ENCODE measurements at regions of chr6 and their contacts with region 1.

Region 1: GRCh38 chr6:12648171-12648570 is 68.4 kb upstream of the PHACTR1 start:
- DNase-seq: no peak
- ATAC-seq: no peak
- H3K4me3 ChIP-seq: no peak overlapping the region
- H3K27ac ChIP-seq: no peak overlapping the region
- H3K4me1 ChIP-seq: no peaks in the 10 kb centered on the region
- H3K27me3 ChIP-seq: peaks cover 3% of the 10 kb centered on the region
- CTCF ChIP-seq: no peak
- POLR2A ChIP-seq: no peak
- RAD21 ChIP-seq: no peak

Region 2: DNA sequence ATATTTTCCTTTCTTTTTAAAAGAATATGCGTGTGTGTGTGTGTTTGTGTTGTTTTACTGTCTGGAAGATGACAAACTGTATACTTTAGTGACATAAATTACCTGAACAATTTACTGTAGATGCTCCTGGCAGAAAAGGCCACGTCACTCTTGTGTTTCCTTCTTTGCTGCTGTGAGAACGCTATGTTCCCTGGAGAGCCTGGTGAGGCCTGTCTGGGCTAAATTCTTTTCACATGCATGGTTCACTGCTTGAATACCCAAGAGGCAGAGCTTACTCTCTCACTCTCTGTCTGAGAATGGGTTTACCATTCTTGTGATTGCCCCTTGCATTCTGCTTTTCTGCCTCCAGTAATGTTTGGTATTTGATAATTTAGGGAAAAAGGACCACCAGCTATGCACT is 293.7 kb before region 1 on chr6:
- CTCF ChIA-PET with region 1: no interaction called
- POLR2A ChIA-PET with region 1: no interaction called
- RAD21 ChIA-PET with region 1: no interaction called
- intact Hi-C with region 1: no loop called
- DNase-seq: no peak
- ATAC-seq: no peak
- H3K4me3 ChIP-seq: no peak overlapping the region
- H3K27ac ChIP-seq: no peak overlapping the region
- H3K4me1 ChIP-seq: peaks cover 0 to 11% of the 10 kb centered on the region in 2 experiments; a peak in 3 of 4 replicates
- H3K27me3 ChIP-seq: no peaks in the 10 kb centered on the region
- CTCF ChIP-seq: no peak
- POLR2A ChIP-seq: no peak
- RAD21 ChIP-seq: no peak

Region 3: GRCh38 chr6:12836009-12836408 is 187.8 kb after region 1 on chr6:
- CTCF ChIA-PET with region 1: no interaction called
- POLR2A ChIA-PET with region 1: no interaction called
- RAD21 ChIA-PET with region 1: no interaction called
- intact Hi-C with region 1: loop called (anchors 5 kb)
- DNase-seq: no peak
- ATAC-seq: no peak
- H3K4me3 ChIP-seq: no peak overlapping the region
- H3K27ac ChIP-seq: no peak overlapping the region
- H3K4me1 ChIP-seq: no peaks in the 10 kb centered on the region
- H3K27me3 ChIP-seq: 0 out of 2 replicates have a peak, but pooled peaks cover 8% of the 10 kb centered on the region
- CTCF ChIP-seq: no peak
- POLR2A ChIP-seq: no peak
- RAD21 ChIP-seq: no peak